MCF 10A (cell line): ENCODE measurements at regions of chr6 and their contacts with region 1.

Region 1: DNA sequence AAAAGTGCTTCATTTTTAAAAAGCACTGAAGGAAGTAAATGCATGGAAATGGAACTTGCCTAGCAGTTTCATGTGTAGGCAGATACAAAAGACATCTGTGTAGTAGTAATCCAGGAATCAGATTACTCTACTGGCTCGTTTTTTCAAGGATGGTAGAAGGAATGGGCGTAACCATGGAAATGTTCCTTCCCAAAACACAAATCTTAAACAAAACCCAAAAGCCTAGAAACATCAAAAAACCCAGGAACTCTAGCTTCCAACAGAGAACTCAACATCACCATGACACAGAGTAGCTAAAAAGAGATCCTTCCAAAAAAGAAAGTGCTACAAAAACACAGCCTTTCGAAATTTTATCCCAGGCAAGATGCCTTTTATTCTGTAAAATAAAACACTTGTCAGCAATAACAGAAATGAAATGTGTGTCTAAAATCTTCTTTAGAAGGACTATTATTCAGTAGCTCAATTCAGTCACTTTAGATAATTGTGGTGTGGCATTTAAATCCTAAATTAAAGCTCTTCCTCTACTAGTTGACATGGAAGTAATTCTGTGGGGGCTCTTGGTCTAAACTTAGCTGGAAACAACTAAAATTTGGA is 81.7 kb downstream of the FAM217A start:
- DNase-seq: no peak
- H3K4me3 Mint-ChIP-seq: no peak overlapping the region
- H3K27ac Mint-ChIP-seq: no peak overlapping the region
- H3K4me1 Mint-ChIP-seq: peaks cover 19% of the 10 kb centered on the region
- H3K27me3 Mint-ChIP-seq: no peaks in the 10 kb centered on the region
- CTCF ChIP-seq: no peak

Region 2: GRCh38 chr6:4008324-4009047 is 11.2 kb after region 1 on chr6:
- CTCF ChIA-PET with region 1: interaction called, 10 read pairs
- POLR2A ChIA-PET with region 1: interaction called, 5 read pairs
- intact Hi-C with region 1: no loop called
- DNase-seq: peak; percentile 79
- H3K4me3 Mint-ChIP-seq: no peak overlapping the region
- H3K27ac Mint-ChIP-seq: no peak overlapping the region
- H3K4me1 Mint-ChIP-seq: peaks cover 17% of the 10 kb centered on the region
- H3K27me3 Mint-ChIP-seq: no peaks in the 10 kb centered on the region
- CTCF ChIP-seq: peak; percentile 55